Mammary epithelial cell (primary cell): ENCODE measurements at regions of chr22 and their contacts with region 1.

Region 1: DNA sequence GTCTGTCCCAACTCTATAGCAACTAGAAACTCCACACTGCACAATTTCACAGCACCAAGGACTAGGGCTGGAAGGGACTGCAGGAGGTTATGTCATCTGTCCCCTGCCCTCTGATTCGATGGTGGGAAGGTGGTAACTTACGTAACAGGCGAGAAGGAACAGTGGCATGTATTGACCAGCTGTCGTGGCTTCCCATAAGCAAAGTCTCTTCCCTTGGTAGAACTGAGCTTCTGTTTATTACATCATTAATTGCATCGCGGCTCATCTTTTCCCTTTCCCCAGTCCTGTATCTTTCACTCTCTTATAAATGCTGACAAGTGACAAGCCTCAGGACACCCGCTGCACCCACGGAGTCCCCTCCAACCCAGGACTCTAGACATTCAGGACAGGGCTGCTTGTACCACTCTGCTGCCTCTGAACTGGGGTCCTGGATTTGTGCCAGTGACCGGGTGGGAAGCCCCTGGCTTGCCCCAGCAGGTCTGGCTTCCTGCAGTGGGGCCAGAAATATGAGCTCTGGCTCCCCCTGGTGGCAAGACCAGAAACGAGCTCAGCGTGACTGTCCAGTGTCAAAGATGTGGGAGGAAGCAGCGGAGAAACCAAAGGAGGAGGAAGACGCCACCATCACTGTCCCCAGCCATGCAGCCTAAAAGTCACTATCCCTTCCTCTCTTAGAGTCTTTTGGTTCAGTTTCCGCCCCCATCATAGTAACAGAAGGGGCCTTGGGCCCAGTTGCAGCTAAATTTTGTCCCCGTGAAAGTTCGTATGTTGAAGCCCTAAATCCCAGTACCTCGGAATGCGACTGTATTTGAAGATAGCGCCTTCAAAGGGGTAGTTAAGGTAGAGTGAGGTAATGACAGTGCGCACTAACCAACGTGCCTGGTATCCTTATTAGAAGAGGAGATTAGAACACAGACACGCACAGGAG is 84.5 kb downstream of the ISX start:
- DNase-seq: peak; percentile 34
- H3K4me3 ChIP-seq: no peak overlapping the region
- H3K27ac ChIP-seq: no peak overlapping the region
- H3K4me1 ChIP-seq: no peaks in the 10 kb centered on the region
- H3K27me3 ChIP-seq: no peaks in the 10 kb centered on the region
- CTCF ChIP-seq: peak; percentile 62 to 77

Region 2: GRCh38 chr22:34414484-34415440 is 735.7 kb before region 1 on chr22:
- CTCF ChIA-PET with region 1: interaction called, 3 read pairs
- dilution Hi-C with region 1: no loop called
- in situ Hi-C with region 1: loop called in 1 of 2 experiments (anchors 10 kb)
- intact Hi-C with region 1: loop called (anchors 1 kb)
- DNase-seq: peak; percentile 73
- H3K4me3 ChIP-seq: no peak overlapping the region
- H3K27ac ChIP-seq: no peak overlapping the region
- H3K4me1 ChIP-seq: no peaks in the 10 kb centered on the region
- H3K27me3 ChIP-seq: no peaks in the 10 kb centered on the region
- CTCF ChIP-seq: peak; percentile 75 to 83

Region 3: DNA sequence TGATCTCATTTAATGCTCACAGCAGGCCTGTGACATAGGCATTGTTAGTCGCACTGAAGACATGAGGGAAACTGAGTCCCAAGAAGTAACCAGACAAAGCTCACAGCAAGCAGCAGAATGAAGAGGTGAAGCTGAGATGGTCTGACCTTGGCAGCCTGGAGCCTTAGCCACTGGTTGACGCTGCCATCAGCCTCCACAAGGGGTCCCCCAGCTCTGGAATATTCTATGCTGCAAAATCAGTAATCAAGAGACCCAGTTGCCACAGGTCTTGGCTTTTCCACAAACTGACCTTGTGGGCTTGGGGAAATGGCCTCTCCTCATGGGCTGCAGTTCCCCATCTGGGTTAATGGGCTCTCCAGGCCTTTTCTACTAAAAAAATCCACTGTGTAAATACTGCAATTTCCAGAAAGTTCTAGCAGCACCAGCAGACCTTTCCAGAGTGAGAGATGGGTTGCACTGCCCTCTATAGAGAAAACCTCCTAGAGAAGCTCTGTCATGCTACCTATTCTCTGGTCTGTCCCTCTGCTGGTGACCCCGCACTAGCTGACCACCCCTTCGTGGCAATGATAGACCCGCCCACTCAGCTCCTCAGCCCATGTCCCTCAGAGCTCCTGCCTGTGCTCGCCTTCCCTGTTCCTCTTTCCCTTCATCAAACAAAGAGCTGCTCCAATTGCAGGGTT is 107.1 kb before region 1 on chr22:
- CTCF ChIA-PET with region 1: interaction called, 5 read pairs
- dilution Hi-C with region 1: no loop called
- in situ Hi-C with region 1: no loop called
- intact Hi-C with region 1: loop called (anchors 1 kb)
- DNase-seq: no peak
- H3K4me3 ChIP-seq: no peak overlapping the region
- H3K27ac ChIP-seq: no peak overlapping the region
- H3K4me1 ChIP-seq: no peaks in the 10 kb centered on the region
- H3K27me3 ChIP-seq: no peaks in the 10 kb centered on the region
- CTCF ChIP-seq: no peak

Region 4: GRCh38 chr22:35183917-35184316 is 33.5 kb after region 1 on chr22:
- CTCF ChIA-PET with region 1: no interaction called
- dilution Hi-C with region 1: no loop called
- in situ Hi-C with region 1: no loop called
- intact Hi-C with region 1: no loop called
- DNase-seq: no peak
- H3K4me3 ChIP-seq: no peak overlapping the region
- H3K27ac ChIP-seq: no peak overlapping the region
- H3K4me1 ChIP-seq: no peaks in the 10 kb centered on the region
- H3K27me3 ChIP-seq: peaks cover 2% of the 10 kb centered on the region
- CTCF ChIP-seq: no peak

Region 5: GRCh38 chr22:35524966-35525686 is 374.7 kb after region 1 on chr22:
- CTCF ChIA-PET with region 1: no interaction called
- dilution Hi-C with region 1: no loop called
- in situ Hi-C with region 1: no loop called
- intact Hi-C with region 1: no loop called
- DNase-seq: no peak
- H3K4me3 ChIP-seq: no peak overlapping the region
- H3K27ac ChIP-seq: no peak overlapping the region
- H3K4me1 ChIP-seq: peaks cover 10% of the 10 kb centered on the region
- H3K27me3 ChIP-seq: no peaks in the 10 kb centered on the region
- CTCF ChIP-seq: no peak